ENCODE measurements at regions of chr17 and their contacts with region 1.

Region 1: DNA sequence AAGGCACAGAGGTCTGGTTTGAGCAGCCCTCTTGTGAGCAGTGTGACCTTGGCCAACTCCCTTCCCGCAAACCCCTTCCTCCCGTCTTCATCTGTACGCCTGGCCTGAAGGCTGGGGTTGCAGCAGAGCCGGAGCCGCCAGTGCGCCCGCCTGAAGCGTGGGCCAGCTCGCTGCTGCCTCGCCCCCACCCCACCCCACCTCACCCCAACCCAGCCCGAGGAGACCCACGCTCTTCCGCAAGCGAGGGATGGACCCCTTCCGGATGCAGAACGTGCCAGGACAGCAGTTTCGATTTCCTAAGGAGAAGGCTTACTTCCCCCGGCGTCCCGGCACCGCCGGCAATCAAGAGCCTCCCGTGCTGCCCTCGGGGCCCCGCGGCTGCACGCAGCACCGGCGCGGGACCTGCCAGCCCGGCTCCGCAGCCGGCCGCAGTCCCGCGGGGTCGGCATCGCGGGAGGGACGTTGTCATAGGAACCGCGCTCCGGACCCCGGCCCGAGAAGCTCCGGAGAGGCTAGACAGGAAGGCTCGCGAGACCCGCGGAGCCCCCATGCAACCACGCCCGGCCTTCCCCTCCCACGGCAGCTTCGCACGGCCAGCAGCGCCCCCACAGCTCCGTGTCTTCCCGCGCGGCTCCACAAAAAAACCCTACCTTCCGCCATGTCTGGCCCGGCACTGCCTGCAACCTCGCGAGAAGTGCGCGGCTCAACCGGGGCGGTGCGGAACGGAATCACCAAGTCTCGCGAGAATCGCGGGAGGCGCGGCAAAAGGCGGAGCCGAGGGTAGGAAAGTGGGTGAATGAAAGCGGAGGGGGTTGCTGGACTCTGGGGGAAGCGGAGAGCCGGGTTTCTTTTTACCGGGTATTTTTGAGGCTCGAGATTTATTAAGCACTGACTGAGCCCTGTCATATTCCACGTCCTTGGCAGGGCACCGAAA is at the start of gene ANKFY1:
- DNase-seq: peak; percentile 95 to 98 (median 98)
- H3K4me3 ChIP-seq: peak within 1 kb of the TSS; percentile 95
- H3K27ac ChIP-seq: peak within 1 kb of the TSS; percentile 52 to 61
- H3K4me1 ChIP-seq: peaks cover 15% of the 10 kb centered on the region
- H3K27me3 ChIP-seq: no peaks in the 10 kb centered on the region
- CTCF ChIP-seq: peak in 2 of 3 donors; percentile 30
- EP300 ChIP-seq: no peak
- POLR2A ChIP-seq: peak; percentile 47
- total RNA-seq, gene ANKFY1: 28.4 to 65.1 (median 47.4) TPM

Region 2: GRCh38 chr17:4229627-4230541 is 33.7 kb before region 1 on chr17:
- intact Hi-C with region 1: loop called in 1 of 4 experiments (anchors 5 kb)
- DNase-seq: peak; percentile 43 to 79 (median 69)
- H3K4me3 ChIP-seq: no peak overlapping the region
- H3K27ac ChIP-seq: peak overlapping the region; percentile 50 to 67
- H3K4me1 ChIP-seq: peaks cover 7% of the 10 kb centered on the region
- H3K27me3 ChIP-seq: no peaks in the 10 kb centered on the region
- CTCF ChIP-seq: no peak
- EP300 ChIP-seq: no peak
- POLR2A ChIP-seq: no peak